K562 (cell line): ENCODE measurements at regions of chrX and their contacts with region 1.

Region 1: DNA sequence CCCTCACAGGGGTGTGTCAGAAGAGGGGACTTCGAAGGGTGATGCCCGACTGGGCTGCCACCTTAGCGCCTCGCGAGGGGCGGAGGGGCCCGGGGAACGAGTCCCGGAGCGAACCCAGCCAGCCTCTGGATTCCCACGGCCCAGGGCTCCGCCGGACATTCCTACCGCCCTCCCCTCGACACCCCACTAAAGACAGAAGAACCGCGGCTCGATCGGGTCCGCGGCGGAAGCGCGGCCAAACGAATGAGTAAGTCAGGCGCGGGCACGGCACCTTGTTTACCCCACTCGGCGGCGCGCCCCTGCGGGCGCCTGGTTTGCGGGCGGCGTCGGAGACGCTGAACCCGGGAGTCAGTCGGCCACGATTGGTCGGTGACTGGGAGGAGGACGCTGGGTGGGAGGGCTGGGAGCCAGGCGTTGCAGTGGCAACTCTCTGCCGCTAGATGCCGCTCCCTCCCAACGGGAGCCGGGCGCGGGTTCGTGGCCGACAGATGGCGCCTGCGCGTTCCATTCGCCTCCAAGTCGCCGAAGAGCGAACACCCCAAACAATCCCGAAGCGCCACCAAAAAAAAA is 1.4 kb upstream of the STAG2 start:
- DNase-seq: peak; percentile 86 to 94 (median 90)
- ATAC-seq: peak; percentile 80
- H3K4me3 ChIP-seq: peak overlapping the region; percentile 95
- H3K27ac ChIP-seq: peak overlapping the region; percentile 99
- H3K4me1 ChIP-seq: peaks cover 4 to 5% of the 10 kb centered on the region in 2 experiments; a peak in 2 of 5 replicates
- H3K27me3 ChIP-seq: no peaks in the 10 kb centered on the region
- CTCF ChIP-seq: peak; percentile 74 to 99 (median 99)
- EP300 ChIP-seq: no peak
- POLR2A ChIP-seq: peak; percentile 77
- RAD21 ChIP-seq: peak; percentile 80 to 84

Region 2: DNA sequence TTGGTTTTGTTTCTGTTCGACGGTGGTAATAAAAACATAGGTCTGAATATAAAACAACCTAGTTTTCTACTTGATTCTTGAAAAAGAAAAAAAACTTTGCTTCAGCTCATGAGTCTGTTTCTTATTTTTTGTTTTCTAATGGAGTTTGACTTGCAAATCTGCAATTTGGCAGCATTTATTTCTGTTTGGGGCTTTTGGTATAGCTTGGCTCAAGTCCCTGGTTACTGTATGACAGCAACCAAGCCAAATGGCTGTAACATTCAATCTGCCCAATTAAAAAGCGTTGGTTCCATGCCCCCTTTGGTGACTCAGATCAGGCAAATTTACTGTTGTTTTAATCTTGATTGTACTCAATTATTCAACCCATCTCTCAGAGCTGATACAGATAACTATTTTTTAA is 512.6 kb before region 1 on chrX:
- CTCF ChIA-PET with region 1: no interaction called
- POLR2A ChIA-PET with region 1: no interaction called
- in situ Hi-C with region 1: no loop called
- intact Hi-C with region 1: no loop called
- DNase-seq: no peak
- ATAC-seq: no peak
- H3K4me3 ChIP-seq: no peak overlapping the region
- H3K27ac ChIP-seq: no peak overlapping the region
- H3K4me1 ChIP-seq: no peaks in the 10 kb centered on the region
- H3K27me3 ChIP-seq: no peaks in the 10 kb centered on the region
- CTCF ChIP-seq: no peak
- EP300 ChIP-seq: no peak
- POLR2A ChIP-seq: no peak
- RAD21 ChIP-seq: no peak

Region 3: DNA sequence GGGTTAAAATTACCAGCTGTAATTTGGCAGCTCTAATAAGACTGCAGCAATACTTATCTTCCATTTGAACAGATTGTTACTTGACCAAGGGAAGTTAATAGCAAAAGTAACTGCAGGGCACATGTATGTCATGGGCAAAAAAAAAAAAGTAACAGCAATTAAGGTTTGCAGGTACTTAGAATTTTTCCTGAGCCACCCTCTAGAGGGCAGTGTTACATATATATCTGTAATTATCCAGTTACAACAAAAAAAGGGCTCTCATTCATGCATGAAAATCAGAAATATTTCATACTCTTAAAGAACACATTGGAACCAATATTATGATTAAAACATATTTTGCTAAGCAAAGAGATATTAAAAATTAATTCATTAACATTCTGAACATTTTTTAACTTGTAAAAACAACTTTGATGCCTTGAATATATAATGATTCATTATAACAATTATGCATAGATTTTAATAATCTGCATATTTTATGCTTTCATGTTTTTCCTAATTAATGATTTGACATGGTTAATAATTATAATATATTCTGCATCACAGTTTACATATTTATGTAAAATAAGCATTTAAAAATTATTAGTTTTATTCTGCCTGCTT is 75.2 kb before region 1 on chrX:
- CTCF ChIA-PET with region 1: no interaction called
- POLR2A ChIA-PET with region 1: no interaction called
- in situ Hi-C with region 1: no loop called
- intact Hi-C with region 1: loop called (anchors 10 kb)
- DNase-seq: peak; percentile 26 to 55 (median 29)
- ATAC-seq: peak; percentile 74
- H3K4me3 ChIP-seq: no peak overlapping the region
- H3K27ac ChIP-seq: no peak overlapping the region
- H3K4me1 ChIP-seq: no peaks in the 10 kb centered on the region
- H3K27me3 ChIP-seq: no peaks in the 10 kb centered on the region
- CTCF ChIP-seq: peak in 2 of 3 experiments; percentile 36 to 65; a peak in 3 of 6 replicates
- EP300 ChIP-seq: no peak
- POLR2A ChIP-seq: no peak
- RAD21 ChIP-seq: peak; percentile 34 to 47; a peak in 3 of 4 replicates

Region 4: DNA sequence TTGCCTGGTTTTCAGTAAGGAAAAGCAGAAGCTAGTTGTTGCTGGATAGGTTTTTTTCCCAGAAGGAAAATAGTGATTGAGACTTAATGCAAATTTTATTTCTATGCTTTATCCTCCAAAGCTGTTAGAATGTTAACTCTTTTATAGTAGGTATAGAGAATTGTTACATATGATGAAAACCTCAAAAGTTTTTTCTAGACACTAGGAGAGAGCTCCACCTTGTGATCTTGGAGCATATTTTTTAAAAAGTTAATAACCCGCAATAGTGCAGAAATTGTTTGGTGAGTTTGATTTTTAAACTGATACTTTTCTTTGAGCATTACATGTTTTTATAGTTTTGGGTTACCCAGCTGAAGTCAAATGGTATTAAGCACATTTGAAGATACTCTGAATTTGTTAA is 57.9 kb after region 1 on chrX:
- CTCF ChIA-PET with region 1: interaction called, 13 read pairs
- POLR2A ChIA-PET with region 1: no interaction called
- in situ Hi-C with region 1: no loop called
- intact Hi-C with region 1: loop called (anchors 2 kb)
- DNase-seq: no peak
- ATAC-seq: no peak
- H3K4me3 ChIP-seq: no peak overlapping the region
- H3K27ac ChIP-seq: no peak overlapping the region
- H3K4me1 ChIP-seq: peaks cover 0 to 7% of the 10 kb centered on the region in 2 experiments; a peak in 3 of 5 replicates
- H3K27me3 ChIP-seq: no peaks in the 10 kb centered on the region
- CTCF ChIP-seq: peak in 1 of 3 experiments; percentile 40; a peak in 2 of 6 replicates
- EP300 ChIP-seq: no peak
- POLR2A ChIP-seq: no peak
- RAD21 ChIP-seq: peak; percentile 22 to 41; a peak in 2 of 4 replicates

Region 5: DNA sequence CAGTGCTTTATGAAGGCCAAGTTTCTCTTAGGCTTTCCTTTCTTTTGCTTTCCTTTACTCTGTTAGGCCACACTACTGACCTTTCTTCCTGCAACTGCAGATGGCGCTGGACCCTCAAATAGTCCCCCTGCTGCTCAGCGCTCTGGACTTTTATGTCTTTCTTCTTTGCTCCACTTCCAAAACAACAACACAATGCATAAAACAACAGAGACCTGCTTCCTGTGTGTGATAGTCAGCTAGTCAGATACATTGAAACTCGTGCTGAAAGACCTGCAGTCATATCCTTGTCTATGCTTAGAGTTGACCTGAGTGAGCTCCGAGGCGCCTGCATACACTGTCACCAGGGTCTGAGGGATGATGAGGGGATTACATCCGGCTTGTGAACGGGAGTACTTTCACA is 263.4 kb after region 1 on chrX:
- CTCF ChIA-PET with region 1: no interaction called
- POLR2A ChIA-PET with region 1: no interaction called
- in situ Hi-C with region 1: no loop called
- intact Hi-C with region 1: loop called (anchors 5 kb)
- DNase-seq: peak in 2 of 4 experiments; percentile 21 to 25
- ATAC-seq: peak; percentile 88
- H3K4me3 ChIP-seq: no peak overlapping the region
- H3K27ac ChIP-seq: no peak overlapping the region
- H3K4me1 ChIP-seq: no peaks in the 10 kb centered on the region; a peak in 1 of 5 replicates
- H3K27me3 ChIP-seq: no peaks in the 10 kb centered on the region; a peak in 1 of 5 replicates
- CTCF ChIP-seq: peak; percentile 57 to 62 (median 57)
- EP300 ChIP-seq: no peak
- POLR2A ChIP-seq: no peak
- RAD21 ChIP-seq: peak in 1 of 2 experiments; percentile 50; a peak in 2 of 4 replicates